ENCODE measurements at regions of chrX and their contacts with region 1.

Region 1: DNA sequence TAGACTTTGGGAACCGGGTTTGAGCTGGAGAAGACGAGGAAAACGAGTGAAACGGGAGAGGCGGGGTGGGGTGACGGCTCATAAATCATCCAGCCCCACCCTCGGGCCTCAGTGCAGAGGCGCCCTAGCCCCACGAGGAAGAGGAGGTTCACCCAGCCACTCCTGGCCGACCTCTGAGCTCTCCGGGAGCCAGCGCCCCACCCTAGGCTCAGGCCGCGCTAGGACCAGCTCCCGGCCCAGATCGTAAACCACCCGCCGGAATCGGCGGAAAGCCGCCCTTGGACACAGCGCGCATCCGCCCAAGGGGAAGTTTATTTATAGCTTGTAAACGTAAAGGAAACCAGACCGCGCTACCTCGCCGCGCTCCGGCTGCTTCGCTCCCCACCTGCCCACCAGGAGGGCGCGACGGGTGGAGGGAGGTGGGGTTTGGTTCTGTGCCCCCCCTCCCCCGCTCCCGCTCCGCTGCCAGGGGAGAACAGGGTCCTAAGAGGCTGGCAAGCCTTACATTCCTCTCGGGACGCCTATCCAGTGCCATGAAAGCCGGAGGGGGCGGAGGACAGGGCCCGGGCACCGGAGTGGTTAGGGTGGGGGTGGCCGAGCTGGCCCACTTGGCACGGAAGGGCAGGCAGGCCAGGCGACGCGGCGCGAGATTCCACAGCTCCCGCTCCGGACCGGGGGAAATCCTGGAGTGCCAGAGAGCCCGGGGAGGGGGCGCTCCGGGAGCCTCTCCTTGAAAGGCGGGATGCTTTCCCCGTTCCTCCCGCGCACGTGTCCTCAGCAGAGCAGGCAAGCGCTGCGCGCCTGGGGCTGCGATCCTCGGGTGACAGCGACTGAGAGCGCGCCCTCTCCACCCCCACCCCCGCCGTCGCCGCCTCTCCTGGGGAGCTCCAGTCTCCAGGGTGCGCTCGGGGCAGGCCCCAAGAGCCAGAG is 84.2 kb downstream of the BCOR start:
- DNase-seq: peak; percentile 48
- CTCF ChIP-seq: no peak

Region 2: DNA sequence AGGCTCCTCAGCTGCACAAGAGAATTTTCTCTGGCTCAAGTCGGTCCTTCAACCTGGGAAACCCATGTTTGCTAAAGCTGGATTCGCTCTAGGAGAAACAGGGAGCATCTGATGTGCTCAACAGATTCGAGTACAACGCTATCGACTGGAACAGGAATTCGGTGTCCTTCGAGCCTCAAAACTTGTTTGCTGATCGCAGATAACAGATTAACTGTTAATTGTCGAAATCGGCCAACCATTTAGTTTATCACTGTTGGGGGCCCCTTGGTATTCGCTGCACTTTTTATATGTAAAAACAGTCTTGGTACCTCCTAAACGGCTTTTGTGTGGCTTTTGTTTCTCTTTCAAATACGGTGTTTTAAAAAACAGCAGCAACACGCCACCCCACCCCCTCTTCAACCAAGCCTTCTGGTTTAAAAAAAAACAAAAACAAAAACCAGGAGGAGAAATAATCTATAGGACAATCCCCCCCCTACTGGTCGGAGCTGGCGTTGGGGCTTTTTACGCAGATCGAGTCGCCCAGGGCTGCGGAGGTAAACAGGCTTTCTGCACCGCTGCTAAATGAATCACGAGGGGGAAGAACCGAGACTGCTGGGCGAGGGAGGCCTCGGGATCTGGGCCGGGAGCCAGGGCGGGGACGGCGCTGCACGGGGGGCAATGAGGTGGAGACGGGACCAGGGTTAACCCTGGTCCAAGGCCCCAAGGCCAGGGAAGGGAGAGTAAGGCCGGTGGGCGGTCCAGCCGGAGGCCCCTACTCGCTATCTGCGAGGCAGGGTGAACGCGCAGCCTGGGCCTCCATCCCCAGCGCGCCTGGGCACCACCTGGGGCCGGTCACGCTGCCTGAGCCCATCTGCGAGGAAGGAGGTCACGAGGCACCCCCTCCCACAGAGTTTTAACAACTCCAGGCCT is 155.9 kb after region 1 on chrX:
- in situ Hi-C with region 1: loop called (anchors 25 kb)
- DNase-seq: peak; percentile 77
- CTCF ChIP-seq: peak; percentile 55